Vagina (tissue), 2 donors: ENCODE measurements at regions of chr1 and their contacts with region 1.

Region 1: DNA sequence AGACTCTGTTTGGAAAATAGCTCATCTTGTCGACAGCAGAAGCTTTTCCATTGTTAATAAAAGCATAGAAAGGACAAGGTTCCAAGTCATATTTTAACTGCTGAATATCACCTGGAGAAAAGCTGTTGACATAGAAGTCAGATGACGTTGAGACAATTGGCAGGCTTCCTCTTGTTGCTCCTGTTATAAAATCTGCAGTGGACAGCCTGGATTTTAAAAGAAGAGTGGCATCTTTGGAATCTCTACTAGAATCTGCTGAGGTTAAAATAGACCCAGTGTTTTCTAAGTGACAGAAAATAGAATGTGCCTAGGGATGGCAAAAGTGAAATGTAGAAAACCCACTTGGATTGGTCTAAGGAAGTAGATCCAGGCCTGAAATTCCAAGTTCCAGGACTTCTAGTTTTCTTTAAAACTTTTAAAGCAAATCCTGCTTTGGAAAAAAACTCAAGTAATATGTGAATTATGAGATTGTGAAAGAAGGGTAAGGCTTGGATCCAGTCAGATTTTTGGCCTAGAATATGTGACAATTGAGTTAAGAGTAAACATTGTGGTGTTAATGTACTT is 53.6 kb upstream of the NEXN start:
- DNase-seq: no peak
- H3K4me3 ChIP-seq: no peak overlapping the region
- H3K27ac ChIP-seq: peak overlapping the region; percentile 80
- H3K4me1 ChIP-seq: peaks cover 51% of the 10 kb centered on the region
- H3K27me3 ChIP-seq: no peaks in the 10 kb centered on the region
- CTCF ChIP-seq: no peak
- POLR2A ChIP-seq: no peak

Region 2: DNA sequence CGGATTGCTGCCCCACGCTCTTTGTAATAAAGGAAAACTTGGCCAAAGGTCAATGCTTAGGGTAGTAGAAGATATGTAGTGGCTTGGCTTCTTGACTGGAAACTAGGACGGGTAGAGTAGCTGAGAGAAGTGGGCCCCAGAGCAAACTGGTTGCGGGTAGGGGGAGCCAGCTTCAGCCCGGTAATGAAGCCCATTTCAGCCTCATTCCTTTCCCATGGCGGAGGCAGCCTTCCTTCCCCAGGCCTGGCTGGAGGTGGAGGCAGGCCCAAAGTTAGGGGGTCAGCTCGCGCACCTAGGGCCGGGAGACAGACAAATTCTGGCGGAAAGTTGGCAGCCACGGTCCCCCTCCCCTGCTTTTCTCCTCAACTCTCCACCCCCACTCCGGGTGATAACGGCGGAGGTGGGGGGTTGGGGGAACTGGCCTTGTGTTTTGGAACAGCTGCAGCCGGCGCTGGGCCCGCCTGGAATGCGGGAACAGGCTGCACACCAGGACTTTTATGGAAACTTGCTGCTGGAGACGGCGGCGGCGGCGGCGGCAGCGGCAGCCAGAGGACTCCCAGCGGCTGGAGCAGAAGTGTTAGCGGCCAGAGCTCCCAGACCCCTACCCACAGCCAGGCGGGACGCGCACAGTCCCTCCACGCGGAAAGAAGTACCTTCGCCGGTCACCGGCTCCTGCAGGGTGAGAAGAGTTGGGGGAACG is 53.4 kb after region 1 on chr1 and contains the start of gene NEXN:
- intact Hi-C with region 1: loop called (anchors 5 kb)
- DNase-seq: peak in 1 of 2 donors; percentile 89
- H3K4me3 ChIP-seq: peak within 1 kb of the TSS; percentile 79 to 80
- H3K27ac ChIP-seq: peak within 1 kb of the TSS; percentile 86
- H3K4me1 ChIP-seq: peaks cover 18% of the 10 kb centered on the region
- H3K27me3 ChIP-seq: no peaks in the 10 kb centered on the region
- CTCF ChIP-seq: no peak
- POLR2A ChIP-seq: no peak
- total RNA-seq, gene NEXN: 20.1 TPM

Region 3: GRCh38 chr1:78702427-78702826 is 867.6 kb after region 1 on chr1:
- intact Hi-C with region 1: no loop called
- DNase-seq: no peak
- H3K4me3 ChIP-seq: no peak overlapping the region
- H3K27ac ChIP-seq: no peak overlapping the region
- H3K4me1 ChIP-seq: no peaks in the 10 kb centered on the region
- H3K27me3 ChIP-seq: no peaks in the 10 kb centered on the region
- CTCF ChIP-seq: no peak
- POLR2A ChIP-seq: no peak